Caco-2 (cell line): ENCODE measurements at regions of chr6 and their contacts with region 1.

Region 1: DNA sequence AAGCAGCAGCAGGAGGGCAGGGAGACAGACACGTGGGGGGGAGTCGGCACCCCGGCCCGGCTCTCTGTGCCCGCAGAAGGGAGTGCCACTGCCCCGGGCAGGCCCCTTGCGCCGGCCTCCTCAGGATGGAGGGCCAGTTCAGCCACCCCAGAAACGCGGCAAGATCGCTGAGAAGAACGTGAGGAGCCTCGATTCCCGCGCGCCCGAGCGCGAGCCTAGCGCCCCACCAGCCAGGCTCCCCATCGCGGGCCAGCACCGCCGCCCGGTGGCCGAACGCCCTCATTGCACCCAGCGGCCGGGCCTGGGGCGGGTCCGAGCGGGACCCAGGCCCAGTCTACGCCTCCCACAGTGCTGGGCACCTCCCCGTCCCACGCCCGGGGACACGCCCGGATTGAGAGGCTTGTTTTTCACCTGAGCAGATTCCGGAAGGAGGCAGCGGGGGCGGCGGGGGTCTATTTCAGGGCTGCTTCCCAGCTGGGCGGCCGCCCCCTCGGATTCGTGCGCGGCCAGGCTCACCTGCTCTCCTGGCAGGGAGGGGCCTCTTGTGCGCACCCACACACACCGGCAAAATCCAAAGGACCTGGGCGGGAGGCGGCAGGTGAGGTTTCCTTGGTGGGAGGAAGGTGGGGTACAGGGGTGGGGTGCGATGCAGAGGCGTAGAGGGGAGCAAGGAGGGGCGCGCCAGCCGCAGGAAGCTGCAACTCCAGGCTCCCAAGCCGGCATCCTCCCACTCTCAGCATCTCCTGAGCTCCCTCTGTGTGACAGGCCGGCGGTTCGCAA is 9.0 kb upstream of the GRM4 start:
- DNase-seq: peak; percentile 55 to 81
- H3K4me3 ChIP-seq: no peak overlapping the region
- H3K4me3 Mint-ChIP-seq: peak overlapping the region; percentile 55
- H3K27ac Mint-ChIP-seq: no peak overlapping the region
- H3K4me1 ChIP-seq: peaks cover 4% of the 10 kb centered on the region; the same call in 1 of the 2 replicates
- H3K4me1 Mint-ChIP-seq: no peaks in the 10 kb centered on the region
- H3K27me3 ChIP-seq: peaks cover 2% of the 10 kb centered on the region; the same call in 1 of the 2 replicates
- H3K27me3 Mint-ChIP-seq: peaks cover 13% of the 10 kb centered on the region
- CTCF ChIP-seq: peak; percentile 77 to 92

Region 2: DNA sequence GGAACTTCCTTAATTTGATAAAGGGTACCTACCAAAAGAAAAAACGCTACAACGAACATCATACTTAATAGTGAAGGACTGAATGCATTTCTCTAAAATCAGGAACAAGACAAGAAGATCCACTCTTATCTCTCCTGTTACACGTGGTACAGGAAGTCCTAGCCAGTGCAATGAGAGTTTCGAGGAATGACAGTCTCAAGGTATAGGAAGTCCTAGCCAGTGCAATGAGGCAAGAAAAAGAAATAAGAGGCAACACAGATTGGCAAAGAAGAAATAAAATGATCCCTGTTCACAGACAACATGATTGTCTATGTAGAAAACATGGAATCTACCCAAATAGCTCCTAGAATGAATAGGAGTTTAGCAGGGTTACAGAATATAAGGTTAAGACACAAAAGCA is 183.3 kb before region 1 on chr6:
- CTCF ChIA-PET with region 1: no interaction called
- POLR2A ChIA-PET with region 1: no interaction called
- intact Hi-C with region 1: no loop called
- DNase-seq: no peak
- H3K4me3 ChIP-seq: no peak overlapping the region
- H3K4me3 Mint-ChIP-seq: no peak overlapping the region
- H3K27ac Mint-ChIP-seq: no peak overlapping the region
- H3K4me1 ChIP-seq: no peaks in the 10 kb centered on the region
- H3K4me1 Mint-ChIP-seq: peaks cover 12% of the 10 kb centered on the region
- H3K27me3 ChIP-seq: no peaks in the 10 kb centered on the region; the same call in 1 of the 2 replicates
- H3K27me3 Mint-ChIP-seq: peaks cover 18% of the 10 kb centered on the region
- CTCF ChIP-seq: no peak

Region 3: DNA sequence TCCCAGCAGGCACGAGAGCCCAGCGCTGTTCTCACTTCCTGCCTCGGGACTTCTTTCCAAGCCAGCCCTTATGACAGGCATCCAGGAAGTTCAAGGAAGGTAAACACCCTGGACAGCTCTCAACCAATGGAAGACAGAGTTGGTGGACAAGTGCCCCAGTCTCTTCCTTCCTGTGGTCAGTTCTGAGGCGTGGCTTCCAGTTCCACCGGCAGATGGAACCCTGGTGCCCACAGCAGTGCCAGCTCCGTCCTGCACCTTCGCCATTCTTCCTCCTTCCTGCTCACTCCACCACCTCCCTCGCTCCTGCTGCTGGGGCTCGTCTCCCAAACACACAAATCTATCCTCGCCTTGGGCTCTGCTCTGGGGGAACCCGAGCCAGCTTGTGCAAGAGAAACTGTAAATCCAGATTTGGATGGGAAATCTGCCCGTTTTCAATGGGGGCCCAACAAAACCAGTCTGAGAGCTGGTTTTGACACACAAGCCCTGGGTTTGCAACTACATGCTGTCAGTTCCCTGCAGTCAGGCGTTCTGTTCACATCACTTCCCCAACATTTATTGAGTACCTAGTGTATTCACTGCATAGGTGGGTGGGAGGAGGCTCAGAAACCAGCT is 171.6 kb before region 1 on chr6:
- CTCF ChIA-PET with region 1: no interaction called
- POLR2A ChIA-PET with region 1: no interaction called
- intact Hi-C with region 1: loop called (anchors 10 kb)
- DNase-seq: no peak
- H3K4me3 ChIP-seq: no peak overlapping the region
- H3K4me3 Mint-ChIP-seq: no peak overlapping the region
- H3K27ac Mint-ChIP-seq: no peak overlapping the region
- H3K4me1 ChIP-seq: peaks cover 9% of the 10 kb centered on the region
- H3K4me1 Mint-ChIP-seq: peaks cover 2% of the 10 kb centered on the region
- H3K27me3 ChIP-seq: no peaks in the 10 kb centered on the region; the same call in 1 of the 2 replicates
- H3K27me3 Mint-ChIP-seq: no peaks in the 10 kb centered on the region
- CTCF ChIP-seq: no peak

Region 4: GRCh38 chr6:34055223-34055933 is 99.5 kb before region 1 on chr6:
- CTCF ChIA-PET with region 1: interaction called, 39 read pairs
- POLR2A ChIA-PET with region 1: no interaction called
- intact Hi-C with region 1: loop called (anchors 1 kb)
- DNase-seq: peak; percentile 70 to 72
- H3K4me3 ChIP-seq: no peak overlapping the region
- H3K4me3 Mint-ChIP-seq: no peak overlapping the region
- H3K27ac Mint-ChIP-seq: no peak overlapping the region
- H3K4me1 ChIP-seq: no peaks in the 10 kb centered on the region
- H3K4me1 Mint-ChIP-seq: peaks cover 6% of the 10 kb centered on the region
- H3K27me3 ChIP-seq: no peaks in the 10 kb centered on the region
- H3K27me3 Mint-ChIP-seq: peaks cover 6% of the 10 kb centered on the region
- CTCF ChIP-seq: peak; percentile 77 to 92

Region 5: DNA sequence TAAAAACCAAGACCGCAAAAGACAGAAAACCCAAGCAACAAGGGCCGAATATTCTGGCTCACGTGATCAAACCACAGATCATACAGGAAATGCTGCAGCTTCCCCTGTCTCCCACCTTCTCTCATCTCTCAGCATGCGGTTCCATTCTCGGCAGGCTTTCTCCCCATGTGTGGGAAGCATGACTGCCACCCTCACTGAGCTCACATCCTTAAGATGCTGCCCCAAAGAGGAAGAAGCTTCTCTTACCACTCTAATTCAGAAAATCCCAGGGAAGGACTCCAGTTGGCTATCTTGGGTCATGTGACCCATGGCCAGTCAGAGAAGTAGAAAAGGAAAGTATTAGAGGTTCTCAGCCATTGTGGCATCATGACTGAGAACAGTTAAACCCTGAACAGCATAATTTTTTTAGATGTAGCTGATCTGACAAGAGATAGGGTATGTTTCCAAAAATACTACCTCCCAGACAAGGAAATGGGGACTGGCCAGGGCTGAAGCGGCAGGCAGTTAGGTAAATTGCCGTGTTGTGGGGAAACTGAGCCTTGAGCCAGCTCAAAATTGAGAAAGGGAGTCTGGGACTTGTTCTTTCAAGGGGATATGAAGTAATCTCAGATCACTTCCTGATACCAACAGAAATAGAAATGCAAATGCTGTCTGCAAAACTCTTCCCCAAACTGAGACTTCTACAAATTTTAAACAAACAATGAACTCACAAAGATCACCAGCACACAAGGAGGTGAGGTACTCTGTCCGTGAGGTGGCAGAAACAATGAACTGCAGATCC is 28.1 kb after region 1 on chr6:
- CTCF ChIA-PET with region 1: no interaction called
- POLR2A ChIA-PET with region 1: no interaction called
- intact Hi-C with region 1: no loop called
- DNase-seq: no peak
- H3K4me3 ChIP-seq: no peak overlapping the region
- H3K4me3 Mint-ChIP-seq: no peak overlapping the region
- H3K27ac Mint-ChIP-seq: no peak overlapping the region
- H3K4me1 ChIP-seq: no peaks in the 10 kb centered on the region
- H3K4me1 Mint-ChIP-seq: no peaks in the 10 kb centered on the region
- H3K27me3 ChIP-seq: no peaks in the 10 kb centered on the region
- H3K27me3 Mint-ChIP-seq: no peaks in the 10 kb centered on the region
- CTCF ChIP-seq: no peak